WTC11 (cell line): ENCODE measurements at regions of chr7 and their contacts with region 1.

Region 1: GRCh38 chr7:20786779-20787659 is at the start of gene SP8:
- DNase-seq: peak; percentile 87
- ATAC-seq: peak; percentile 23
- H3K4me3 Mint-ChIP-seq: peak within 1 kb of the TSS; percentile 90
- H3K27ac Mint-ChIP-seq: peak within 1 kb of the TSS; percentile 91
- H3K4me1 Mint-ChIP-seq: peaks cover 53% of the 10 kb centered on the region
- H3K27me3 Mint-ChIP-seq: peaks cover 55% of the 10 kb centered on the region
- CTCF ChIP-seq: no peak
- total RNA-seq, gene SP8: 44.1 to 63.6 TPM (median 45.9 TPM) in 3 replicates

Region 2: DNA sequence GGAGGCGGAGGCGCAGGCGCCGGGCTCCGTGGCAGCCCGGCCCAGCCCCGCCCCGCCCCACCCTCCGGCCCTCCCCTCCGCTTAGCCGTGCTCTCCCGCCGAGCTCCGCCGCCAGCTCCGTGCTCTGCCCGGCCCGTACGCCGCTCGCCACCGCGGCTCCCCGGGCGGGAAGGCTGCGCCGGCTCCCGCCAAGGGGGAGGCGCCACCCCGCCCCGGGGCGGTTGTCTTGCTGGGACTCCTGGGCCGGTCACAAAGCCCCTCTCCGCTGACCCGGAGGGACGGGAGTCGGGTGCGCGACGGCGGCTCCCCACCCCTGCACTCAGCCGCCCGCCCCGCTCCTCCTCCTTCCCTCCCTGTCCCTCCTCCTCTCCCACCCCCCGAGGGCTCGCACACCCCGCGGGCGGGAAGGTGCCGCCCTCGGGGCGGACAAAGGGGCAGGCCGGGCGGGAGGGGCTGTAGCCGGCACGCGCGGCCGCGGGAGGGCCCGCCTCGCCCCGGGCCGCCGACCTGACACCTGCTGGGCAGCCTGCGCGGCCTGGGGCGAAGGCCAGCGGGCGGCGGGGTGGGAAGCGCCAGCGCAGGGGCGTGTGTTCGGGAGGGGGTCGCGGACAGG is 11.2 kb after region 1 on chr7:
- CTCF ChIA-PET with region 1: interaction called, 7 read pairs
- POLR2A ChIA-PET with region 1: interaction called, 16 read pairs
- DNase-seq: peak; percentile 65
- ATAC-seq: peak; percentile 51
- H3K4me3 Mint-ChIP-seq: peak overlapping the region; percentile 77
- H3K27ac Mint-ChIP-seq: no peak overlapping the region
- H3K4me1 Mint-ChIP-seq: peaks cover 65% of the 10 kb centered on the region
- H3K27me3 Mint-ChIP-seq: peaks cover 23% of the 10 kb centered on the region
- CTCF ChIP-seq: no peak